Activated CD8-positive, alpha-beta T cell treated with anti-CD3 and anti-CD28 coated beads for 36 hours (primary cell): ENCODE measurements at regions of chr6 and their contacts with region 1.

Region 1: DNA sequence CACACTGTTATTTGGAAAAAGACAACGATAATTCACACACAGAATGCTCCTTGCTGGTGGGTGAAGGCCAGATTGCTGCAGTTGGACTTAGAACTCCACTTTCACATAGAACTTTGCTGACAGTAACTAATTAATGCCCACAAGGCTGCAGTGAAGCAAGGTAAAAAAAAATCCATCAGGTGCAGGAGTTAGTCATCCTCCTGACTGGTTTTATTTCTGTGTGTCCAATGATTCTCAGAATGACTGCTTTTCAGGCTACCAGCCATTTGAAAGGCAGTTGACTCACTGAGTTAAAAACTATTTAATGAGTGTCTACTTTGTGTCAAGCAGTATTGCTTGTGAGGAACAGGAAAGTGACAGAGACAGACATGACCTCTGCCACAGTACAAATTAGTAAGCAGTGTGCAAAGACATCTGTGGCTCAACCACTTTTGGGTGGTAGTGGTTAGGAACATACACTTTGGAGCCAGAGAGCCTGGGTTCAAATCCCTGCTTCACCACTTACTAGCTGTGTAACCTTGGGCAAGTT is 41.9 kb downstream of the ELOVL5 start:
- DNase-seq: peak; percentile 62
- ATAC-seq: peak; percentile 86
- H3K4me3 Mint-ChIP-seq: no peak overlapping the region
- H3K27ac Mint-ChIP-seq: peak overlapping the region; percentile 55
- H3K4me1 Mint-ChIP-seq: peaks cover 82% of the 10 kb centered on the region
- H3K27me3 Mint-ChIP-seq: no peaks in the 10 kb centered on the region
- CTCF ChIP-seq: no peak

Region 2: GRCh38 chr6:53188833-53189232 is 118.0 kb before region 1 on chr6:
- CTCF ChIA-PET with region 1: no interaction called
- POLR2A ChIA-PET with region 1: no interaction called
- intact Hi-C with region 1: no loop called
- DNase-seq: no peak
- ATAC-seq: no peak
- H3K4me3 Mint-ChIP-seq: peak overlapping the region; percentile 67
- H3K27ac Mint-ChIP-seq: peak overlapping the region; percentile 92
- H3K4me1 Mint-ChIP-seq: peaks cover 11% of the 10 kb centered on the region
- H3K27me3 Mint-ChIP-seq: no peaks in the 10 kb centered on the region
- CTCF ChIP-seq: no peak

Region 3: DNA sequence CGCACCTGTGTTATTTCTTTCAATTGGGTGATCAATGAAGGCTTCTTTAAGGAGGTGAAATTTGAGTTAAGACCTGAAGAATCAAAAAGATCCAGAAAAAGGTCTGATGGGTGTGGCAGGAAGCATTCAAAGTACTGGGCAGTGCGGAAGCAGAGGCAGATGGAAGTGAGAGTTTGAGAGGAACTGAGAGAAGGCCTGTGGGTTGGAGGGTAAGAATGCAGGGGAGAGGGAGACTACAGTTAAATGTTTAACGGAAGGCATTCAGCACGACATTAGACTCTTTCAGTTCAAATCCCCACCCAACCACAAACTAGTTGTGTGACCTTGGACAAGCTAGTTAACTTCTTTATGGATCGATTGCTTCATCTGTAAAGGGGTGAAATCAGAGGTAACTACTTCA is 107.7 kb before region 1 on chr6:
- CTCF ChIA-PET with region 1: no interaction called
- POLR2A ChIA-PET with region 1: no interaction called
- intact Hi-C with region 1: no loop called
- DNase-seq: no peak
- ATAC-seq: no peak
- H3K4me3 Mint-ChIP-seq: no peak overlapping the region
- H3K27ac Mint-ChIP-seq: no peak overlapping the region
- H3K4me1 Mint-ChIP-seq: peaks cover 10% of the 10 kb centered on the region
- H3K27me3 Mint-ChIP-seq: no peaks in the 10 kb centered on the region
- CTCF ChIP-seq: no peak

Region 4: DNA sequence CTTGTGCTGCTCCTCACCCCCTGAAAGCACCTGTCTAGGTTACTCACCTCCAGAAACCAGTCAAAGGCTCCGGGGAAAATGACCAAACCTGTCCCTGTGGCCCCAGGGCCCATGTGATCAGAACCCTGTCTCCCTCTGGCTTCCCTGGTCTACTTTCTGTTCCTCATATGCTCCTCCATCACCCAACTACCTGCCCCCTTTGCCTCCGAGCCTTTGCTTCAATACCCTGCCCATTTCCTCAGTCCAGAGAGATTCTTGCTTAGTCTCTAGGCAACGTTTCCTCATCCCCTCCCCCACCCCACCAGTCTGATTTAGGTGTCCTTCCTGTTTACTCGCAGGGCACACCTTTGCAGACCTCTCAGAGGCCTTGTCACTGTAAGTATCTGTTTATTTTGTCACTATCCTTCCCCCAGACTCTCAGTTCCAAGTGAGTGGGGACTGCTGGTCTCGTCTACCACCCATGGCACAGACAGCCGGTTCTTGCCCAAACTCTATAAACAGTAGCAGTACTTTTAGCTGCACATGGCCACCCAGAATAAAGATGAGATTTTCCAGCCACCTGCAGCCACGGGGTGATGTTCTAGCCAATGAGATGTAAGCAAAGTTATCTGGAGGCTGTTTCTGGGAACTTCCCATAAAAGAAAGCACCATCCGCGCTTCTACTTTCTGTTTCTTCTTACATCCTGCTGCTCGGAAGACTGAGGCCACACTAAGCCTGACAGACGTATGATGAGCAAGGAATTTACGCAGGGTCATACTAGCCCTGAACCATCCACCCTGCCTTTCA is 28.5 kb after region 1 on chr6:
- CTCF ChIA-PET with region 1: interaction called, 4 read pairs
- POLR2A ChIA-PET with region 1: interaction called, 6 read pairs
- intact Hi-C with region 1: loop called (anchors 1 kb)
- DNase-seq: peak; percentile 87
- ATAC-seq: peak; percentile 90
- H3K4me3 Mint-ChIP-seq: peak overlapping the region; percentile 75
- H3K27ac Mint-ChIP-seq: peak overlapping the region; percentile 99
- H3K4me1 Mint-ChIP-seq: peaks cover 86% of the 10 kb centered on the region
- H3K27me3 Mint-ChIP-seq: no peaks in the 10 kb centered on the region
- CTCF ChIP-seq: no peak